PC-9 (cell line): ENCODE measurements at regions of chr3 and their contacts with region 1.

Region 1: DNA sequence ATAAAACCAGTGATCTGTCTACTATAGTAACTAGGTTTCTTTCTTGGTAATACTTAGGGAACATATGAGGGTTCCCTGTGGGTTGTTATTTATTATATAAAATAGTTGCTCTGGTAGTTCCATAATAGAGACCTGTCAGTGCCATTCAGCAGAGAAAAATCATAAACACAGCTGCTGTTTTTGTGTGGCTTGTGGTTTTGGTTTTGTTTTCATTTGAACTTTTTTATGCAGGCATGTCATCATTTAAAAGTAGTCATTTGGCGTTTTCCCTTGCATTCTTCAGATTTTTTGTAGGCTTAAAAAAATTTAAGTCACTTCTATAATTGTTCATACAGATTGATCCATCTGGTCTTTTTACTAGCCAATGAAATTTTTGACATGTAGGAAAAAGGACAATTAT is 47.9 kb downstream of the PIK3CA start:
- DNase-seq: no peak
- H3K4me3 ChIP-seq: no peak overlapping the region
- H3K27ac ChIP-seq: no peak overlapping the region
- H3K4me1 ChIP-seq: no peaks in the 10 kb centered on the region
- H3K27me3 ChIP-seq: no peaks in the 10 kb centered on the region
- CTCF ChIP-seq: no peak

Region 2: GRCh38 chr3:179113903-179114302 is 82.2 kb before region 1 on chr3:
- CTCF ChIA-PET with region 1: no interaction called
- POLR2A ChIA-PET with region 1: no interaction called
- intact Hi-C with region 1: no loop called
- DNase-seq: no peak
- H3K4me3 ChIP-seq: no peak overlapping the region
- H3K27ac ChIP-seq: no peak overlapping the region
- H3K4me1 ChIP-seq: no peaks in the 10 kb centered on the region
- H3K27me3 ChIP-seq: no peaks in the 10 kb centered on the region
- CTCF ChIP-seq: no peak

Region 3: DNA sequence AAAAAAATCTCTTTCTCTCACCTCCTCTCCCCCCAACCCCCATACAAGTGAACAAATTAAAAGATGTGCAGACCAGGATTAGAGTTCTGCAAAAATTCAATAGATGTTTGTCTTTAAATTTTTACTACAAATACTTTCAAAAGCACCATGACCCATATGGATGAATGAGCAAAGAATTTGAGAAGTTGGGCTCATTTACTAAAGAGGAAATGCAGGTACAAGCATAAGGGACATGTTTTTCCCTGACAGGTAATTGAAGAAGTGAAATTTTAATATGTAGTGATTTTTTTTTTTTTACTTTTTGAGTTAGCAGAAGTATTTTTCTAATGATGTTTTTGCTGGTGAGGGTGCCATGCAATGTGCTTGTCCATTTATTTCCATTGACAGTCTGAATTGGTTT is 32.6 kb before region 1 on chr3:
- CTCF ChIA-PET with region 1: no interaction called
- POLR2A ChIA-PET with region 1: no interaction called
- intact Hi-C with region 1: loop called (anchors 5 kb)
- DNase-seq: no peak
- H3K4me3 ChIP-seq: no peak overlapping the region
- H3K27ac ChIP-seq: no peak overlapping the region
- H3K4me1 ChIP-seq: no peaks in the 10 kb centered on the region
- H3K27me3 ChIP-seq: no peaks in the 10 kb centered on the region
- CTCF ChIP-seq: no peak

Region 4: GRCh38 chr3:179181993-179182551 is 14.0 kb before region 1 on chr3:
- CTCF ChIA-PET with region 1: no interaction called
- POLR2A ChIA-PET with region 1: interaction called, 31 read pairs
- intact Hi-C with region 1: no loop called
- DNase-seq: no peak
- H3K4me3 ChIP-seq: no peak overlapping the region
- H3K27ac ChIP-seq: no peak overlapping the region
- H3K4me1 ChIP-seq: peaks cover 15% of the 10 kb centered on the region; the same call in 1 of the 2 replicates
- H3K27me3 ChIP-seq: no peaks in the 10 kb centered on the region
- CTCF ChIP-seq: no peak

Region 5: GRCh38 chr3:179272385-179272784 is 76.3 kb after region 1 on chr3:
- CTCF ChIA-PET with region 1: no interaction called
- POLR2A ChIA-PET with region 1: no interaction called
- intact Hi-C with region 1: no loop called
- DNase-seq: no peak
- H3K4me3 ChIP-seq: no peak overlapping the region
- H3K27ac ChIP-seq: no peak overlapping the region
- H3K4me1 ChIP-seq: no peaks in the 10 kb centered on the region
- H3K27me3 ChIP-seq: no peaks in the 10 kb centered on the region
- CTCF ChIP-seq: peak; percentile 47; the same call in 1 of the 2 replicates